B cell (primary cell): ENCODE measurements at regions of chr19 and their contacts with region 1.

Region 1: DNA sequence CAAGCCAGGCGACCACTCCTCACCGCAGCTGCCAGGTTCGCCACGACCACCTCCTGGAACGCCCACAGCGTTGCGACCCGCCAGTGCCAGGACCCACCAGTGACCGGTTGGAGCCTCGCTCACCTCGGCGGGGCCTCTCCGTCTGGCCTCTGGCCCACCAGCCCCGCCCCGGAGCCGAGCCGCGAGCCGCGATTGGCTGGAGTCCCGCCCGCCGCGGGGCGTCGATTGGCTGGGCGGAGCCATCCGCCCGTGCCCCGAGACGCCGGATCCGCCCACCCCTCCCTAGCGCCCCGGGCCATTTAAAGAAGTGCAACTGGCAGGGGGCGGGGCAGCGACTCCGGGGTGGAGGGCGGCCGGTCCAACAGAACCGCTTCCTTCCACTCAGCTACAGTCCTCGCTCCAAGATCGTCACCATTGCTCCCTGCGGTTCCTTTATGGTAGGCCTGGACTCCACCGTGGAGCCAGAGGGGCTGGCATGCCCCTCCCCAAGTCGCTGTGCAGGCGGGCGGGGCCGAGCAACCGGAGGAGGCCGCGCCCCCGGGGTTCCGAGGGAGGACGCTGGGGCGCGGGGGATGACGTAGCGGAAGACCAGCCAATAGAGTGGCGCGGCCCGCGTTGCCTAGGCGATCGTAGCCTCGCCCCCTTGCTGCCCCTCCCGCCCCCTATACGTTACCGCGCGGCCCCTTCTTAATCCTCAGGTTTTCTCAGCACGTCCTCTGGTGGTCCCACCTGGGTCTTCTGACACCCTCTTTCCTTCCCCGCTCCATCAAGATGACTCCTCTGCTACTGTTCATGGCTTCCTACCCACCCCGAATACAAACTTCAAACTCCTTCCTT is at the start of gene SERTAD3:
- DNase-seq: peak; percentile 99
- ATAC-seq: peak; percentile 68
- H3K4me3 ChIP-seq: peak within 1 kb of the TSS; percentile 85 to 100 (median 95)
- H3K4me3 Mint-ChIP-seq: peak within 1 kb of the TSS; percentile 97
- H3K27ac ChIP-seq: peak within 1 kb of the TSS; percentile 87 to 92
- H3K27ac Mint-ChIP-seq: peak within 1 kb of the TSS; percentile 95
- H3K4me1 ChIP-seq: peaks cover 12% of the 10 kb centered on the region in 2 donors
- H3K4me1 Mint-ChIP-seq: peaks cover 26% of the 10 kb centered on the region
- H3K27me3 ChIP-seq: no peaks in the 10 kb centered on the region
- H3K27me3 Mint-ChIP-seq: no peaks in the 10 kb centered on the region
- CTCF ChIP-seq: peak; percentile 42
- total RNA-seq, gene SERTAD3: 39.3 and 41.6 TPM in 2 replicates

Region 2: DNA sequence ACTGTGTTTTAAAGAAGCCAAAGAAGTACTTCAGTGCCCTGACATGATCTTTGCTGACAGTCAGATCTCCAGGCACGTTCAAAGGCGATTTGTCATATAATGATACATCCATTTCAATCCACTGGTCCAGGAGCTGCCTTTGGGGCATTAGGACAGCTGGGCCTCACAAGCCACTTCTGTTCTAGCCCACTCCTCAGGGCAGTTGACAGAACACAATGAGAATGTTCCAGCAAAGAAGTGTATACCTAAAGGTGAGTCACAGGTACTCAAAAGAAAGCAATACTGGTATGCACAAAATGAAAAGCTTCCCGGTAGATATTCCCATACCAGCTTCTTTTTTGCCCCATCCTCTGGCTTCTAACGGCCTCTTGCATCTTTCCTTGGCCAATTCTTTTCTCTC is 265.7 kb before region 1 on chr19:
- CTCF ChIA-PET with region 1: no interaction called
- POLR2A ChIA-PET with region 1: no interaction called
- intact Hi-C with region 1: no loop called
- DNase-seq: no peak
- ATAC-seq: no peak
- H3K4me3 ChIP-seq: no peak overlapping the region
- H3K4me3 Mint-ChIP-seq: no peak overlapping the region
- H3K27ac ChIP-seq: no peak overlapping the region
- H3K27ac Mint-ChIP-seq: no peak overlapping the region
- H3K4me1 ChIP-seq: no peaks in the 10 kb centered on the region
- H3K4me1 Mint-ChIP-seq: no peaks in the 10 kb centered on the region
- H3K27me3 ChIP-seq: peaks cover 0 to 5% (median 1%) of the 10 kb centered on the region in 4 experiments
- H3K27me3 Mint-ChIP-seq: peaks cover 31% of the 10 kb centered on the region
- CTCF ChIP-seq: no peak

Region 3: GRCh38 chr19:40274585-40275552 is 169.5 kb before region 1 on chr19:
- CTCF ChIA-PET with region 1: no interaction called
- POLR2A ChIA-PET with region 1: no interaction called
- intact Hi-C with region 1: no loop called
- DNase-seq: peak; percentile 54
- ATAC-seq: peak; percentile 64
- H3K4me3 ChIP-seq: peak overlapping the region in 2 of 5 experiments; percentile 3
- H3K4me3 Mint-ChIP-seq: peak overlapping the region; percentile 62
- H3K27ac ChIP-seq: peak overlapping the region in 1 of 2 donors; percentile 43
- H3K27ac Mint-ChIP-seq: peak overlapping the region; percentile 51
- H3K4me1 ChIP-seq: peaks cover 34 to 40% of the 10 kb centered on the region in 2 donors
- H3K4me1 Mint-ChIP-seq: peaks cover 66% of the 10 kb centered on the region
- H3K27me3 ChIP-seq: no peaks in the 10 kb centered on the region
- H3K27me3 Mint-ChIP-seq: no peaks in the 10 kb centered on the region
- CTCF ChIP-seq: no peak

Region 4: GRCh38 chr19:40285353-40286234 is 158.8 kb before region 1 on chr19:
- CTCF ChIA-PET with region 1: no interaction called
- POLR2A ChIA-PET with region 1: interaction called, 5 read pairs
- intact Hi-C with region 1: loop called (anchors 1 kb)
- DNase-seq: peak; percentile 100
- ATAC-seq: peak; percentile 74
- H3K4me3 ChIP-seq: peak overlapping the region in 4 of 5 experiments; percentile 68 to 89 (median 78)
- H3K4me3 Mint-ChIP-seq: peak overlapping the region; percentile 87
- H3K27ac ChIP-seq: peak overlapping the region; percentile 99 to 100
- H3K27ac Mint-ChIP-seq: peak overlapping the region; percentile 97
- H3K4me1 ChIP-seq: peaks cover 40 to 54% of the 10 kb centered on the region in 2 donors
- H3K4me1 Mint-ChIP-seq: peaks cover 53% of the 10 kb centered on the region
- H3K27me3 ChIP-seq: no peaks in the 10 kb centered on the region
- H3K27me3 Mint-ChIP-seq: no peaks in the 10 kb centered on the region
- CTCF ChIP-seq: no peak

Region 5: GRCh38 chr19:40348125-40348913 is 96.1 kb before region 1 on chr19 and contains the starts of genes C19orf47 and PLD3:
- CTCF ChIA-PET with region 1: interaction called, 4 read pairs
- POLR2A ChIA-PET with region 1: interaction called, 9 read pairs
- intact Hi-C with region 1: loop called (anchors 1 kb)
- DNase-seq: peak; percentile 99
- ATAC-seq: peak; percentile 94
- H3K4me3 ChIP-seq: peak within 1 kb of the TSS; percentile 59 to 90 (median 86)
- H3K4me3 Mint-ChIP-seq: peak within 1 kb of the TSS; percentile 91
- H3K27ac ChIP-seq: peak within 1 kb of the TSS; percentile 40 to 83
- H3K27ac Mint-ChIP-seq: peak within 1 kb of the TSS; percentile 97
- H3K4me1 ChIP-seq: peaks cover 12 to 17% of the 10 kb centered on the region in 2 donors
- H3K4me1 Mint-ChIP-seq: peaks cover 27% of the 10 kb centered on the region
- H3K27me3 ChIP-seq: no peaks in the 10 kb centered on the region
- H3K27me3 Mint-ChIP-seq: no peaks in the 10 kb centered on the region
- CTCF ChIP-seq: no peak
- total RNA-seq, gene C19orf47: 14.3 and 16.7 TPM in 2 replicates
- total RNA-seq, gene PLD3: 61.7 and 69.0 TPM in 2 replicates

Region 6: GRCh38 chr19:40425450-40426287 is 18.7 kb before region 1 on chr19 and contains the start of gene SERTAD1:
- CTCF ChIA-PET with region 1: interaction called, 87 read pairs
- POLR2A ChIA-PET with region 1: interaction called, 63 read pairs
- intact Hi-C with region 1: loop called (anchors 1 kb)
- DNase-seq: peak; percentile 100
- ATAC-seq: peak; percentile 89
- H3K4me3 ChIP-seq: peak within 1 kb of the TSS; percentile 71 to 89 (median 82)
- H3K4me3 Mint-ChIP-seq: peak within 1 kb of the TSS; percentile 98
- H3K27ac ChIP-seq: peak within 1 kb of the TSS; percentile 84 to 93
- H3K27ac Mint-ChIP-seq: peak within 1 kb of the TSS; percentile 98
- H3K4me1 ChIP-seq: peaks cover 14 to 24% of the 10 kb centered on the region in 2 donors
- H3K4me1 Mint-ChIP-seq: peaks cover 27% of the 10 kb centered on the region
- H3K27me3 ChIP-seq: no peaks in the 10 kb centered on the region
- H3K27me3 Mint-ChIP-seq: no peaks in the 10 kb centered on the region
- CTCF ChIP-seq: peak; percentile 75
- total RNA-seq, gene SERTAD1: 11.9 and 13.6 TPM in 2 replicates

Region 7: GRCh38 chr19:40465557-40466150 is 21.2 kb after region 1 on chr19 and contains the start of gene BLVRB:
- CTCF ChIA-PET with region 1: interaction called, 7 read pairs
- POLR2A ChIA-PET with region 1: interaction called, 12 read pairs
- intact Hi-C with region 1: loop called (anchors 1 kb)
- DNase-seq: peak; percentile 100
- ATAC-seq: peak; percentile 89
- H3K4me3 ChIP-seq: peak within 1 kb of the TSS; percentile 1 to 70 (median 62)
- H3K4me3 Mint-ChIP-seq: peak within 1 kb of the TSS; percentile 87
- H3K27ac ChIP-seq: peak within 1 kb of the TSS; percentile 38 to 60
- H3K27ac Mint-ChIP-seq: peak within 1 kb of the TSS; percentile 66
- H3K4me1 ChIP-seq: peaks cover 30 to 44% of the 10 kb centered on the region in 2 donors
- H3K4me1 Mint-ChIP-seq: peaks cover 44% of the 10 kb centered on the region
- H3K27me3 ChIP-seq: peaks cover 0 to 23% (median 3%) of the 10 kb centered on the region in 4 experiments
- H3K27me3 Mint-ChIP-seq: peaks cover 12% of the 10 kb centered on the region
- CTCF ChIP-seq: no peak
- total RNA-seq, gene BLVRB: 11.8 and 14.2 TPM in 2 replicates

Region 8: DNA sequence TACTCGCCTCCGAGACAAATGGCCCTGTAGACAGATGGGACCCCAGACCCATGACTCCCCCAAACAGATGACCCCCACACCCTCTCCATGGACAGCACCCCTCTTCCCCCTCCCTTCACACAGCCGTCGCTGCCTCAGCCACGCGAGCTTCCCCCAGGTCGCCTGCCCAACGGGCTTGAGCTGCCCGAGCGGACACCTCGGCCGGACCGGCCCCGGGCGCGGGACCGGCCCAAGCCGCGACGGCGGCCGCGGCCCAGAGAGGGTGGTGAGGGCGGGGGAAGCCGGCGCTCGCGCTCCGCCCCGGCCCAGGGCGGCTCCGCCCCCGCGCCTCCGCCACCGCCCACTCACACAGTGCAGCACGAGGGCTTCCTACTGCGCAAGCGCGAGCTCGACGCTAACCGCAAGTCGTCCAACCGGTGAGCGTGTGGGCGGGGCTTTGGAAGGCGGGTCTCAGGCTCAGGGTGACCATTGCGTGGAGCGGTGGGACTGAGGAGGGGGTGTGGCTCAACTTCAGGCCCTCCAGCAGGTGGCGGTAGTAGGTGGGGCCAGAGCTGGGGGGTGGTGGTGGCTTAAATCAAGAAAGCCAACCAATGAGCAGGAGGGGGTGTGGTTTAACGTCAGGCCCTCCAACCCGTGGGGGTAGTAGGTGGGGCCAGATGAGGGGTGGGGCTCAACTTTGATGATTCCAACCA is 126.0 kb after region 1 on chr19:
- CTCF ChIA-PET with region 1: no interaction called
- POLR2A ChIA-PET with region 1: interaction called, 8 read pairs
- intact Hi-C with region 1: loop called (anchors 2 kb)
- DNase-seq: peak; percentile 100
- ATAC-seq: peak; percentile 93
- H3K4me3 ChIP-seq: peak overlapping the region in 3 of 5 experiments; percentile 36 to 47 (median 37)
- H3K4me3 Mint-ChIP-seq: peak overlapping the region; percentile 70
- H3K27ac ChIP-seq: peak overlapping the region in 1 of 2 donors; percentile 33
- H3K27ac Mint-ChIP-seq: peak overlapping the region; percentile 83
- H3K4me1 ChIP-seq: peaks cover 24 to 27% of the 10 kb centered on the region in 2 donors
- H3K4me1 Mint-ChIP-seq: peaks cover 20% of the 10 kb centered on the region
- H3K27me3 ChIP-seq: peaks cover 0 to 32% (median 21%) of the 10 kb centered on the region in 4 experiments
- H3K27me3 Mint-ChIP-seq: peaks cover 4% of the 10 kb centered on the region
- CTCF ChIP-seq: peak; percentile 54

Region 9: DNA sequence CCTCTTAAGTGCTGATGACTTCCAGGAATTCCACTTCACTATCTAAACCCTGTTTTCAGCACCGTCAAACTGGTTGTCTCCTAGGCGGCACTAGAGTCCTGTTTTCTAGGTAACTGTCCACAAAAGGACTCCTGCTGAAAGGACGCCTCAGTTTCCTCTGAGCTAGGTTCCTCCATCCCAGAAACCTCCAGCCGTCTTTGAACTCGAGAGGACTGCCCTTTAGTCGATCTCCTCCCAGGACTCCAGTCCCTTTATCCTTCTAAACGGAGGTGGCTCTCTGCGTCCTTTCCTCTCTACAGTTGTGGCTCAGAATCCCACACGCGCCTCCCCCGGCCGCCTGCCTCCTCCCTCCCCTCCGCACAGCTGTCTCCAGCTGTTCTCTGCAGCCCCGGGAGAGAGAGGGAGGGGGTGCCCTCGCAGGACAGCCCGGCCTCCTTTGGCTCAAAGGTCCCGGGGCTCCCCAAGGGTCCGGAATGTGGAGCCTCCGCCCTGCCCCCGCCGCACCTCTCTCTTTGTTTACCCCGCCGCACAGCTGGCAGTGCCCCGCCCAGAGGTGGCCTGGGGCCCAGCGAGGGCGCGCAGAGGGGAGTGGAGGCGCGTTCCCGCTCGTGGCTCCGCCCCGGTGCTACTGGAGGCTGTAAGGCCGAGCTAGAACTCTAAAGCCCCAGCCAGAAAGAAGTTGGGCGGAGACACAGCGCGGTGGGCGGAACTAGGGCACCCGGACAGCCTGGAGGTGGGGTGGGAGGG is 159.2 kb after region 1 on chr19:
- CTCF ChIA-PET with region 1: interaction called, 3 read pairs
- POLR2A ChIA-PET with region 1: interaction called, 3 read pairs
- intact Hi-C with region 1: loop called (anchors 1 kb)
- DNase-seq: peak; percentile 97
- ATAC-seq: peak; percentile 75
- H3K4me3 ChIP-seq: peak overlapping the region in 4 of 5 experiments; percentile 27 to 66 (median 34)
- H3K4me3 Mint-ChIP-seq: peak overlapping the region; percentile 87
- H3K27ac ChIP-seq: peak overlapping the region in 1 of 2 donors; percentile 32
- H3K27ac Mint-ChIP-seq: peak overlapping the region; percentile 83
- H3K4me1 ChIP-seq: peaks cover 69 to 76% of the 10 kb centered on the region in 2 donors
- H3K4me1 Mint-ChIP-seq: peaks cover 68% of the 10 kb centered on the region
- H3K27me3 ChIP-seq: peaks cover 0 to 43% (median 26%) of the 10 kb centered on the region in 4 experiments
- H3K27me3 Mint-ChIP-seq: peaks cover 23% of the 10 kb centered on the region
- CTCF ChIP-seq: no peak